Ovary (tissue), 10 donors: ENCODE measurements at regions of chr10 and their contacts with region 1.

Region 1: DNA sequence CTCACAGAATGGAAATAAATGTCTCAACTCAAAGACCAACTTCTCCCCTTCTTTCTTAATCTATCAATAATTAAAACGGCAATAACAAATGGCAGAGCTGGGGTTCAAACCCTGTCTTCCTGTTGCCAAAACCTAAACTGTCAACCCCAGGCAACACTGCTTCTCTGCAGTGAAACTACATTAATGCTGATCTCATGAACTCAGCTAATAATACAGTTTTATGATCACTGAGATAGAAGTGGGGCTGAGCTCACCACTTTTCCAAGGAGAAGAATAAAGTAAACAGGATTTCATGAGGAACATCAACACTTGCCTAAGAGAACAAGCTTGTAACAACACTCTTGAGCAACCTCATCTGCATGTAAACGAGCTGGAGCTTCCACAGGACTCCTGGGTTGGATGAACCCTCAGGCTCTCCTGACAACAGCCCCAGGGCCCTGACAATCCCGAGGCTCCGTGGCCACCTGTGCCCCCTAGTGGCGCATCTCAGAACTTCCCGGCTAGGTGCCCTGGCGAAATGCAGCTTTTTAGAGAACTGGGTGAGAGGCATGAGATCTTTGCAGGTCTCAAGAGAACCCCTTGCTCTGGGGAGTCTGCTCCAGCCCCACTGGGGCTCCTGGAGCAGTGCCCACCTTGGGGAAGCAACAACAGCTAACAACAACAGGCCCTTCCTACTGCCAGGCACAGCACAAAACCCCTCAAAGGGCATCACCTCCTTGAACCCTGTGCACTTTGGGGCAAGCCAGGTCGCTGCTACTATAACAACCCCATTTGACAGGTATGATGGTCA is 169.3 kb downstream of the SH3PXD2A start:
- DNase-seq: peak; percentile 79 to 91 (median 89)
- H3K4me3 ChIP-seq: no peak overlapping the region
- H3K27ac ChIP-seq: peak overlapping the region in 1 of 2 donors; percentile 28
- H3K4me1 ChIP-seq: no peaks in the 10 kb centered on the region
- H3K27me3 ChIP-seq: no peaks in the 10 kb centered on the region
- CTCF ChIP-seq: peak; percentile 93 to 96 (median 94)
- EP300 ChIP-seq: peak; percentile 43
- POLR2A ChIP-seq: no peak

Region 2: GRCh38 chr10:103491493-103492381 is 194.3 kb before region 1 on chr10:
- intact Hi-C with region 1: loop called in 1 of 4 experiments (anchors 10 kb)
- DNase-seq: peak; percentile 52 to 77 (median 65)
- H3K4me3 ChIP-seq: no peak overlapping the region
- H3K27ac ChIP-seq: peak overlapping the region in 1 of 2 donors; percentile 6
- H3K4me1 ChIP-seq: peaks cover 14% of the 10 kb centered on the region
- H3K27me3 ChIP-seq: no peaks in the 10 kb centered on the region
- CTCF ChIP-seq: no peak
- EP300 ChIP-seq: no peak
- POLR2A ChIP-seq: no peak

Region 3: DNA sequence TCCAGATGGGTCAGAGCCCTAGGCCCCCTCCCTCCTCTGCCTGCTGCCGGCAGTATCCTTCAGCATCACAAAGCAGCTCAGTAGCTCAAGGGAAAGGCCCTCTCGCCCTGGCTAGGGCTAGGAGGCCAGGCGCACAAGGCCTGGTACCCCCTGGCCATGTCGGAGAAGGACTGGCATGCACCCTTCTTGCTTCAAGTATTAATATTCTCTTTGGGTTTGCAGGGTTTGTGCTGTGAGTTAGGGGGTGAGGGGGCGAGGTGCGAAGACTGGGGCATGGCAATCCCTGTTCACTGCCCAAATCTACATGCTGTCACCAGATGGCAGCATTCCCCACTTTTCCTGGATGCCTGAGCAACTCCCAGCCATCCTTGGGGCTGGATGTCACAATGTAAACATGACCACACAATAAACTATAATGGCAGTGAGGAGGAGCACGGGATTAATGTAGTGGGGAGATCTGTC is 87.4 kb before region 1 on chr10:
- intact Hi-C with region 1: loop called (anchors 2 to 5 kb)
- DNase-seq: peak; percentile 57 to 78 (median 70)
- H3K4me3 ChIP-seq: no peak overlapping the region
- H3K27ac ChIP-seq: no peak overlapping the region
- H3K4me1 ChIP-seq: peaks cover 11% of the 10 kb centered on the region
- H3K27me3 ChIP-seq: no peaks in the 10 kb centered on the region
- CTCF ChIP-seq: peak; percentile 49 to 83 (median 74)
- EP300 ChIP-seq: no peak
- POLR2A ChIP-seq: no peak